Posterior vena cava (tissue), 2 donors: ENCODE measurements at regions of chr14 and their contacts with region 1.

Region 1: DNA sequence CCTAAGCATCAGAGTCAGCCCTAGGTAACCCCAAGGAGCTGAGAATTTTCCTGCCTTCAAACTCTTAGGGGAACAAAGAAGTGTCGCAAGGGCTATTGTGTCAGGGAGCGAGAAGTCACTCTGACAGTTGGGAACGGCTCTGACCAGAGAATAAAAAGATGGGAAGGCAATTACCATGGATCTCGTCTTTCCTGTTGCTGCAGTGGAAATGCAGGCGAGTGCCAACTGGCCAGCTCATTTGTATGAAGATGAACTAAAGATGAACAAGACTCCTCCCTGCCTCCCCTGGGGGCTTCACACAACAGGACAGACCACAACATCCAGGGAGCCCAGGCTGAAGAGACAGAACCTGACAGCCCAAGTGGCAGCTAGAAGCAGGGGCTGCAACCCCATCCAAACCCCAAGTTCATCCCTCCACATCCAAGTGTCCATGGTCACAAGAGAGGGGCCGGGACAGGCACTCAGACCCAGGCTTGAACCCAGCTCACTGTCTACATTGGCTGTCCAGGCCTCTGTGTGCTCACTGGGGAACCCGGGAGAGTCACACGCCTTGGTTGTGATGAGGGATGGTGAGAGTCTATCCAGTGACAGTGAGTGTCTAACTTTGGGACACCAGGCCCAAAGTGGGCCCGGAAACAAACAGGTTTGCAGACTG is 322.4 kb downstream of the BCL11B start:
- DNase-seq: peak; percentile 78

Region 2: GRCh38 chr14:98885038-98885437 is 64.6 kb before region 1 on chr14:
- intact Hi-C with region 1: loop called in 1 of 2 experiments (anchors 2 kb)
- DNase-seq: no peak

Region 3: GRCh38 chr14:98926146-98926545 is 23.5 kb before region 1 on chr14:
- intact Hi-C with region 1: no loop called
- DNase-seq: peak; percentile 77